ENCODE measurements at regions of chr14 and their contacts with region 1.

Region 1: DNA sequence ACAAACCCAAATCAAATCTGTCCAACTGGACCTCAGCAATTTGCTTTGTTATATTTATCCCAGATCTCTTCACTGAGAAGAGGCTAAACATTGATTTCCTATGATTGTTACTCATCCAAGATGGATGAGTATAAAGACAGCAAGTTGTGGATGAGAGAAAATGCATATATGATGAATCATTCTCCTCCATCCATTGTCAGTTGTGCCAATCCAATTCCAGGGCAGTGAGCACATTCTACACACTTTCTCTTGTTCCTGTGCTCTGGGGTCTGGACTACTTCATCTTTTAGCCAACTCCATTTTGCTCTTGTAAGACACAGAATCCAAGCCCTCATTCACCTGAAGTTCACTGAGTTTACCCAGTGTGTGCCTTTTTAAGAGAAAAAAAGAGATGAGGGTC is 105.7 kb downstream of the GCH1 start:
- DNase-seq: peak; percentile 22
- H3K4me3 ChIP-seq: no peak overlapping the region
- CTCF ChIP-seq: no peak

Region 2: GRCh38 chr14:54683882-54684794 is 112.8 kb before region 1 on chr14:
- in situ Hi-C with region 1: loop called (anchors 10 kb)
- DNase-seq: peak; percentile 53
- H3K4me3 ChIP-seq: no peak overlapping the region
- CTCF ChIP-seq: no peak

Region 3: GRCh38 chr14:54698966-54699530 is 97.9 kb before region 1 on chr14:
- in situ Hi-C with region 1: no loop called
- DNase-seq: no peak
- H3K4me3 ChIP-seq: no peak overlapping the region
- CTCF ChIP-seq: no peak

Region 4: DNA sequence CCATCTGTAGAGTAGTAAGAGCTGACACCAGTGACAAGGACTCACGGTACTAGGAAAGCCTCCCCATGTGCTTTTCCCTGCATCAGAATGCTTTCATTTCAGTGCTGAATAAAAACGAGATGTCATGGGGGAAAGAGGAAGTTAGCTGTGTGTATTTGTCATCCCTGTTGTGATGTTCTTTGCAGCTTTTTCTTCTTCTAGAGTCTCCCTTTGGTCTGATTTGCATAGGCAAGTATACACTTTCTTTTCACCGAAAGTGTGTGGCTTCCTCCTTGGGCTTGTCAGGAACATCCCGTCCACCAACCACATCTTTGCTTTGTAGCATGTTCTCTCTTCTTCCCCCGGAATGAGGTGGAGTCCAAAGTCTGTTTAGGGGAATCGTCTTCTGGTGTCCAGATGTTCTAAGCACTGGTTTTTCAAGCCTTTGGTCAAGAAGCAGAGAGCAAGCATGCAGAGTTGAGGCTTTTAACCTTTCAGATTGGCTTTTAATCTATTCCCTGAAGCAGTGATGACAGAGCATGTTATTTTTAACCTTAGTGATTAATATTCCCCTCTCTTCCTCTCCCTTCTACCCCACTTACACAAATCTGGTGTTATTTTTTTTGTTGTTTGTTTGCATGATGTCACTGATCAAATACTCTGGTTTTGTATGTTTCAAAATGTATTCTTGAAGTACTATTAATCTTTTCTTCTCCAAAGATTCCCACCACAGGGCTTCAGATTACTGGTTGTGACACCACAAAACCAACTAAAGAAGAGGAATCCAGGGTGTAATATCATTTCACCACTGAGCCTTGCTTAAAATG is 66.6 kb before region 1 on chr14:
- in situ Hi-C with region 1: loop called (anchors 5 kb)
- DNase-seq: peak; percentile 31
- H3K4me3 ChIP-seq: no peak overlapping the region
- CTCF ChIP-seq: no peak

Region 5: GRCh38 chr14:54893151-54893760 is 96.3 kb after region 1 on chr14:
- in situ Hi-C with region 1: no loop called
- DNase-seq: peak; percentile 53
- H3K4me3 ChIP-seq: no peak overlapping the region
- CTCF ChIP-seq: peak; percentile 77